Right cardiac atrium (tissue), 5 donors: ENCODE measurements at regions of chr6 and their contacts with region 1.

Region 1: DNA sequence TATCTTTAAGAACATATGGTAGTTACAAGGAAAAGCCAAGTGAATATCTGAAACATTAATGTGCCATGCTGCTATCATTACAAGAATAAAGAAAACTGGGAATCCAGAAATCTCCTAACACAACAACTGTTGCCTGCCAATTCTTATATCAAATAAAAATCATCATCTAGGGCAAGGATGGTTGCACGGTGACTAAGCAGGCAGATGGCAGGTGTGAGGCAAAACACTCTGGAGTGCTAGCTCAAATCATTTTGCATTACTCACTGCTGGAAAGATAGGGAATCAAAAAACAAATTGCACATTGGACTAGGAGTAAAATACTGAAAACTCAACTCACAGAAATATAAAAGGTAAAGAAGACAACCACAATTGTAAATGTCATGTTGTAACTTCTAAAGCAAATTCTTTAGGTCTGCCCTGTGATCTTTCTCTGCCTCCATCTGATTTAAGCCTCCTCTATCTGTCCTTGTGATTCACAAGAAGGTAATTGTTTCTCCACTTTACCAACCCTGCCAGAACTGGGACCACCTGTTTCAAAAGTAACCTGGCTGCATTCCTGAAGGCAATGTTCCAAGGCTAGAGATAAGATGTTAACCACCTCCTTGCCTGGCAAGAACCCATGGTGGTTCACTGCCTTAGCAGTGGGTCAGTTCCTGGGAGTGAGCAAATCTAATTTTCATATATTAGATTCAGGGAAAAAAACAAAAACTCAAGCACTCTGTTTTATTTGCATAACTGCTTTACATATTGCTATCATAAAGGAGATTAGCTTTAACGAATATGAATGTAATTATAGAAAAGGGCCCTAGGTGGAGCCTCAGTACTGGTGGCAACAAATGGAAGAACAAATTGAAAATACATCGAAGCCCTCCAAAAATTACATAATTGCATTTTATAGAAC is 33.1 kb upstream of the LCA5 start:
- DNase-seq: no peak
- ATAC-seq: peak; percentile 57 to 62
- H3K4me3 ChIP-seq: peak overlapping the region; percentile 73
- H3K27ac ChIP-seq: no peak overlapping the region
- H3K4me1 ChIP-seq: peaks cover 4% of the 10 kb centered on the region
- H3K27me3 ChIP-seq: no peaks in the 10 kb centered on the region

Region 2: GRCh38 chr6:79713701-79714322 is 143.4 kb after region 1 on chr6:
- intact Hi-C with region 1: loop called (anchors 5 to 10 kb)
- DNase-seq: peak in 2 of 3 donors; percentile 39 to 54
- ATAC-seq: peak; percentile 65 to 71
- H3K4me3 ChIP-seq: no peak overlapping the region
- H3K27ac ChIP-seq: no peak overlapping the region
- H3K4me1 ChIP-seq: peaks cover 2% of the 10 kb centered on the region
- H3K27me3 ChIP-seq: no peaks in the 10 kb centered on the region

Region 3: DNA sequence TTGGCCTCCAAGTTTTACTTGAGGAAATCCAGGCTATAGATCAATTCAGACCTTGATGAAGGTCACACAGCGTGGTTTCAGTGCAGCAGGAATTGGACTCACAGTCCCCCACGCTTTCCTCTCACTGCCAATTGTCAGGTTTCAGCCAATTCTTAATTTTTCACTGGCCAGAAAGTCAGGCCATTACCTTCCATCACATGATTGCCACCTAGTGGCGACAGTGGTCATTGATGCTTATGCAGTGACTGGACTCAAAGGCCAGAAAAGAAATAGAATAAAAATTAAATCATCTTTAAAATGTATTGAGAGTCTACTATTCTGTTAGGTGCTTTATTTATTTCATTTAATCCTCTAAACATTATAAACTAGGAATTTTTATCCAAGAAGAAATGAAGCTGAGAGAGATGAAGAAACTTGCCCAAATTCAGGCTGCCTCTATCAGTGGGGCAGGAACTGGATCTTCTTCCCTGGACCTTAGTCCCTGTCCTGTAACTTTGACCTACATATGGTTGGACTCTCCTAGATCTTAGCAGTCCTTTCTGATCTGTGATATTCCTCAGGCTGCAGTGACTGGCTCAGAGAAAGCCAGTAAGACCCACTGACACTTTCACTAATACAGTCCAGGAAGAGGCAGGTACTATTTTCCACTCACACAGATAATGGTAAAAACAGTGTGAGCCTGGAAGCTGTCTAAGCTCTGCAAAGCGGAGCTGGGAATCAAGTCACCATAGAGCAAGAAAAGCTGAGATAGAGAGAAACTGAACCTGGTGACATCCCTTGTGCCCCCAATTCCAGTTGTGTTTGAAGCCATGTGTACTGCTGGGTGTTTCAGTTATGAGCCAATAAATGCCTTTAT is 243.7 kb after region 1 on chr6:
- intact Hi-C with region 1: loop called in 1 of 4 experiments (anchors 5 kb)
- DNase-seq: peak; percentile 72 to 89 (median 72)
- ATAC-seq: peak; percentile 40 to 76
- H3K4me3 ChIP-seq: no peak overlapping the region
- H3K27ac ChIP-seq: no peak overlapping the region
- H3K4me1 ChIP-seq: no peaks in the 10 kb centered on the region
- H3K27me3 ChIP-seq: no peaks in the 10 kb centered on the region